PC-9 (cell line): ENCODE measurements at regions of chr18 and their contacts with region 1.

Region 1: DNA sequence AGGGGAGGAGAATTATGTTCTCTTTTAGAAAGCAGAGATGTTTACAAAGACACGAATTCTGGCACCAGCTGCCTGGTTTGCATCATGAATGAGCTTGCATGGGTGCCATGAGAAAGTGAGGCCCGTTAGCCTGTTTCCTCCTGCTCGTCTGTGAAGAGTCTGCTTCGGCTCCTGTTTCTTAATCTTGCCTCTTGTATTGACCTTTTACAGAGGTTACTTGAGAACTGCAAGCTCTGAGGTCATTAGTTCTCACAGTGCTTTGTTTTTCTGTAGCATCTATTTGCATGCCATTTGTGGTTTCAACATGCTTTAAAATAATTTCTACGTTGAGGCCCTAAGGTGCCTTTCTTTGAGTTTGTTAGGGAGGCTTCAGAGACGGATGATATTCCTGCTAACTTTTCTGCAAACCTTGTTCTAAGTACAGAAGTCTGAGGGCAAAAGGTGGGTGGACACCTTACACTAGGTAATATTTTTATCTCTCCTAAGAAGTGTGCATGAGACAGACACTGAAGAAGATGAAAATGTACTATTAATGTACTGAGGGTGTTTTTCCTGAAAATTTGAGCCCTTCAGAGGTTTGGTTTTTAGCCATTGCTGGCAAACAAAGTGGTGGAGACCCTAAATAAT is 53.4 kb upstream of the LINC00305 start:
- DNase-seq: no peak
- H3K4me3 ChIP-seq: no peak overlapping the region
- H3K27ac ChIP-seq: no peak overlapping the region
- H3K4me1 ChIP-seq: peaks cover 9% of the 10 kb centered on the region; the same call in 1 of the 2 replicates
- H3K27me3 ChIP-seq: no peaks in the 10 kb centered on the region
- CTCF ChIP-seq: no peak

Region 2: GRCh38 chr18:63237881-63238667 is 964.2 kb before region 1 on chr18:
- CTCF ChIA-PET with region 1: no interaction called
- POLR2A ChIA-PET with region 1: no interaction called
- intact Hi-C with region 1: no loop called
- DNase-seq: peak; percentile 52 to 86
- H3K4me3 ChIP-seq: peak overlapping the region; percentile 42; the same call in 1 of the 2 replicates
- H3K27ac ChIP-seq: peak overlapping the region; percentile 76
- H3K4me1 ChIP-seq: peaks cover 22% of the 10 kb centered on the region
- H3K27me3 ChIP-seq: no peaks in the 10 kb centered on the region
- CTCF ChIP-seq: no peak

Region 3: GRCh38 chr18:64134044-64134747 is 68.1 kb before region 1 on chr18:
- CTCF ChIA-PET with region 1: no interaction called
- POLR2A ChIA-PET with region 1: no interaction called
- intact Hi-C with region 1: loop called (anchors 10 kb)
- DNase-seq: peak in 1 of 2 experiments; percentile 88
- H3K4me3 ChIP-seq: no peak overlapping the region
- H3K27ac ChIP-seq: peak overlapping the region; percentile 59
- H3K4me1 ChIP-seq: peaks cover 17% of the 10 kb centered on the region
- H3K27me3 ChIP-seq: no peaks in the 10 kb centered on the region
- CTCF ChIP-seq: no peak